Left ventricle myocardium superior (tissue), 1 donor: ENCODE measurements at regions of chr17 and their contacts with region 1.

Region 1: DNA sequence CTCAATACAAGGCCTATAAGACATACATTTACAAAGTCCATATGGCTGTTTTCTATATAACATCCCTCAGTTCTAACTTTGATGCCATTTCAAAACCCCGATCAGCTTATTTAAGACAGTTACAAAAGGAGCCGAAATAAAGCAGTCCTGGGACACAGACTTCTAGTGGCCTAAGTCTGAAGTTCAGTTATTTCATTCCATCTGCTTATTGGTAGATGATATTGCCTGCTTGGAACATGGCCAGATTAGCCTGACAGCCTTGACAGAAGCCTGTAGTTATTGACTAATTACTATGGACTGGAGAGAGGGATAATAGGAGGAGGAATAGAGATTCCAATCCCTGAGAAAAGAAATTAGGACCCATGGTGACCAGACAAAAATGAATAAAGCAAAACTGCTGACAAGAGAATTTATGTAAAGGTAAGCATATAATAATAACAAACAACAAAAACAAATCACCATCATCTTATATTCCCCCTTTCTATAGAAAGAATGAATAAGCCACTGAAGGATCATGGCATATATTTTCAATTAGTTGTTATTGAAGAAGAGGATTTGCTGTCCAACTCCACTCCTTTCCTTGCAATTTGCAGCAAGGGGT is 206.3 kb upstream of the TOM1L1 start:
- DNase-seq: no peak
- ATAC-seq: no peak

Region 2: DNA sequence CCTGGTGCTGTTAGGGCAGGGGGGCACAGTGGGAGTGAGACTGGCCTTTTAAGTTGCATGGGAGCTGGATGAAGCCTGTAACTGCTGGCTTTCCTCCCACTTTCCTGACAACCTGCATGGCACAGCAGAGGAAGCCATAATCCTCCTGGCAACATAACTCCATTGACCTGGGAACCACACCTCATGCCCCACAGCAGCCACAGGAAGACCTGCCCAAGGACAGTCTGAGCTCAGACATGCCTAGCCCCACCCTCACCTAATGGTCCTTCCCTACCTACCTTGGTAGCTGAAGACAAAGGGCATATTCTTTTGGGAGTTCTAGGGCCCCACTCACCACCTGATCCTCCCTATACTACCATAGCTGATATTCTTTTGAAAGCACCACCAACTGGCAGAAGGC is 275.9 kb before region 1 on chr17:
- intact Hi-C with region 1: no loop called
- DNase-seq: no peak
- ATAC-seq: no peak

Region 3: DNA sequence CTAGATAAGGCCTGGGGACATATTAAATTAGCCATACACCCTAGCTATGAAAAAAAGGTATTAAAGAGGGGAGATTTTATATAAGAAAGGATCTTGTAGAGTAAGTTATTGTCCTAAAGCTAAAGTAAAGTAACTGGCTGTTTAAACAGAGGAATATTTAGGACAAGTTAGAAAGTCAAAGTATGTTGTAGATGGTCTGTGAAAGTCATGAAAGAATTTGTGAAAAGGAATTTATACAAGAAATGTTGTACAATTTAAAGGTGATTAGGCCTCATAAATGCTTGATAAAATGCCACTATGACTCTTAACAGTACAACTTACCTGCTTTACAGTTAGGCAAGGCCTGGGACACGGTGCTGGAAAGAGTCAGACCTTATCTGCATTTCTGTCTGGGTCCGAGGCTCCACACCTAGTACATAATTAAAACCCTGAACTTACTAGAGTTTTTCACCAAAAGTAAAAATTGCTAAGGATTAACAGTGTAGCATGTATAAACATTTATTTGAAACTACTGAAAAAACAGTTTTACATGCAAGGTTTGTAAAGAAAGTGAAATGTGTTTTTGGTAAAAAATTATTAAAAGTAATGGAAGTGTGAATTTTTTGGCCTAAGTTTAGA is 239.0 kb before region 1 on chr17:
- intact Hi-C with region 1: no loop called
- DNase-seq: no peak
- ATAC-seq: no peak

Region 4: GRCh38 chr17:54626146-54626703 is 68.2 kb before region 1 on chr17:
- intact Hi-C with region 1: loop called (anchors 5 kb)
- DNase-seq: no peak
- ATAC-seq: no peak

Region 5: DNA sequence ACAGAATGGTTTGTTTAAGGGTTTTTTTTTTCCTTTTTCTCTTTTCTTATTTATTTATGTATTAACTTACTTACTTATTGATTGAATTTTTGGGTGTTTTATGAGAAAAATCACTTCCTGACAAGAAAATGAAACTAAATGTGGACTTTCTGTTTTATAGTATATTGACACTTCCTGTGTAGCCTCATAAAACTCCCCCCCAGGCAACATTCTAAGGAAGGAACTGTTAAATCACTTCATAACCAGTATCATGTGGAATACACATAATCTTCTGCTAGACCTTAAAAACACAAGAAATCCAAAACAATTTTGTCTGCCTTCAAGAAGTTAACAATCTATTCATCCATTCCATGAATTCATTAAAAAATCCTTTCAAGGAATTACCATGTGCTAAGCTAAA is 42.2 kb after region 1 on chr17:
- intact Hi-C with region 1: no loop called
- DNase-seq: no peak
- ATAC-seq: no peak

Region 6: DNA sequence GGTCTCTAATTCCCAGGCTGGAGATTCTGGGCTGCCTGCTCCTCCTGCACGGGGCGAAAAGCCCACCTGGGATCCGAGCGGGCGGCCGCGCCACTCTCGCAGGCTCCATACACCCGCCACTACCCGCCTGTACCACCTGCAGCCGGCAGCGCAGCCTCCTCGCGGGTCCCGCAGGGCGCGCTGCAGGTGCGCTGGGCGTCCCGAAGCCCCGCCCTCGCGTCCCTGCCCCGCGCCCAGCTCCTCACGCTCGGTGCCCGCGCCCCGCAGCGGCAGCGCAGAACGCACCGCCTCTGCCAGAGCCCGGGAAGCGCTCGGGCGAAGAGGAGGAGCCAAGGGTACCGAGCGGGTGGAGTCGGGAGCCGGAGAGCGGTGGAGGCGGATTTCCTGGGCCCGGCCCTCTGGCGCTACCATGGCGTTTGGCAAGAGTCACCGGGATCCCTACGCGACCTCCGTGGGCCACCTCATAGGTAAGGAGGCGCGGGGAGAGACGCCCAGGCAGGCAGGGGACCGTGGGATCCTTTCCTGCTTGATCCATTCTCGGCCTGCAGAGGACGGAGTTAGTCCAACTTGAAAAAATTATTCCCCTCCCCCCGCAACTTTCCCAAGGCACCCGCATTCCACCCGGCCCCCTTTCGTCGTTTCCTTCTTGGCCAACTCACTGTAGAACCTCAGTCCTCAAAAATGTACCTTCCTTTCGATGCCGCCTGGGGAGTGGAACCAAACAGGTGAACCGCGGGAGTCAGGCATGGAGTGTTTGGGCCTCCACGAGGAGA is 206.3 kb after region 1 on chr17 and contains the start of gene TOM1L1:
- intact Hi-C with region 1: no loop called
- DNase-seq: peak; percentile 83
- ATAC-seq: peak; percentile 97
- total RNA-seq, gene TOM1L1: 12.1 TPM